ENCODE measurements at regions of chr7 and their contacts with region 1.

Region 1: GRCh38 chr7:1159891-1160668 is at the start of gene ZFAND2A:
- DNase-seq: peak; percentile 100
- ATAC-seq: peak; percentile 100
- H3K4me3 ChIP-seq: peak within 1 kb of the TSS; percentile 73 to 98
- H3K27ac ChIP-seq: peak within 1 kb of the TSS in 1 of 2 donors; percentile 83
- H3K4me1 ChIP-seq: no peaks in the 10 kb centered on the region
- H3K27me3 ChIP-seq: no peaks in the 10 kb centered on the region
- total RNA-seq, gene ZFAND2A: 18.8 to 24.8 TPM

Region 2: DNA sequence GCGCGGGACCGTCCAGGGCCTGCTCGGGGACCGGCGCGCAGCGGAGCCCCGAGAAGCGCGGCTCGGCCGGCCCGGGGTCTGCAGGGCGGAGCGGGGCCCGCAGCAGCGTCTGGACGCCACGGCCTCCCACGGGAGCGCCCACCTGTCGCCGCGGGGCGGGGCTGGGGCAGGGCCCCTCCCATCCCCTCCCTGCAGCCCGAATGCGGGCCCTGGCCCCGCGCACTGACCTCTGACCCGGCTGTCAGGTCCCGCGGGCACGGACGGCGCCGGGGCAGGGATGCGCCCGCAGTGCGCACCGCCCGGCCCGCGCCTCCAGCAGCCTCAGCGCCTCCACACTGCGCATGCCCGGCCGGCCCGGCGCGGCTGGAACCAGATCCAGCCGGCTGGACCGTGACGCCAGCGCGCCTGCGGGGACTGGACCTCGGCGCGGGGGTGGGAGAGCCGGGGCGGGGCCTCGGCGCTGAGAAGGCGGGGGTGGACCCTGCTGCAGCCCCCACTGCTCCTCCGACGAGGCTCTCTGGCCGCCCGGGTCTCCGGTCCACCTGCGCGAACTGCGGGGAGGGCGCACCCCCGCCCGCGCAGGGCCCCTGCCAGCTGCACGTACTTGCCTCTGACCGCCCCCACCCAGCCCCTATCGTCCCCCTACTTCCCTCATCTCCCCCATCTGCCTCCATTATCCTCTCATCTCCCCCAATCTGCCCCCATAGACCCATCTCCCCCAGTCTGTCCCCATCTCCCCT is 131.9 kb before region 1 on chr7:
- intact Hi-C with region 1: no loop called
- DNase-seq: peak; percentile 96 to 97
- ATAC-seq: peak; percentile 93
- H3K4me3 ChIP-seq: peak overlapping the region; percentile 69 to 84
- H3K27ac ChIP-seq: peak overlapping the region; percentile 15 to 77
- H3K4me1 ChIP-seq: no peaks in the 10 kb centered on the region
- H3K27me3 ChIP-seq: no peaks in the 10 kb centered on the region

Region 3: GRCh38 chr7:1137510-1138167 is 22.4 kb before region 1 on chr7:
- intact Hi-C with region 1: loop called in 1 of 2 experiments (anchors 1 kb)
- DNase-seq: no peak
- ATAC-seq: peak; percentile 90
- H3K4me3 ChIP-seq: peak overlapping the region; percentile 68 to 76
- H3K27ac ChIP-seq: no peak overlapping the region
- H3K4me1 ChIP-seq: no peaks in the 10 kb centered on the region
- H3K27me3 ChIP-seq: no peaks in the 10 kb centered on the region

Region 4: DNA sequence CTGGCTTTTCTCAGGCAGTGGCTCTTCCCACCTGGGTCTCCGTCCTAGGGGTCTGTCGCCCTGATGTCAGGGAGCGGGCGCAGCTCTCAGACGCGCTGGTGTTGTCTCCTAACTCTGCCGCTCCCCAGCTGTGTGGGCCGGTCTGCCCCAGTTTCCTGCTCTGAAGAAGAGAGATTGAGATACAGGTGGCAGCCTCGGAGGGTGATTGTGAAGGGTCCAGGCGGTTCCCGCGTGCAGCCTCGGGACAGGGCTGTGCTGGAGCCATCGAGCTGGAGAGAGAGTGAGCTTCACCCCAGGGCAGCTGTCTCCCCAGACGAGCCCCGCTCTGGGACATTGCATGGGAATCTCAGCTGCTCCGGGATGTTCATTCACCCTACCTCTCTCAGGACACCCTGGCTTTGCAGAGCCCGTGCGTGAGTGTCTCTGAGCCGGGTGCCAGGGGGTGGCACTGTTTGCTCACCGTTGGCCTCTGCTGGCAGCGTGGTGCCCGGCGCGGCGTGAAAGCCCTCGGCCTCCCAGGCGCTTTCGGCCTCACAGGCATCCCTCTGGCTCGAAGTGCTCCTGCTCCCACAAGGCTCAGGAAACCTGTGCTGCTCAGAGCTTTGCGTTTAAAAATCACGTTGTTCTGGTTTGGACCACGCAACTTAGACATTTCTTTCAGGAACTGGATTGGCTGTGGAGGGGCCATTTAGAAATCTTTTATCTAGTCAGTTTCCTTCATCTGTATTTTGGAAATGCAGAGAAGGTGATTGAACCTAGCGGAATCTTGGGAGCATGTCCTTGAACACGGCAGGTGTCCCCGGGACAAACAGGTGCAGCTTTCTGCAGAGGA is 33.7 kb after region 1 on chr7:
- intact Hi-C with region 1: no loop called
- DNase-seq: peak in 1 of 2 donors; percentile 54
- ATAC-seq: peak; percentile 74
- H3K4me3 ChIP-seq: no peak overlapping the region
- H3K27ac ChIP-seq: no peak overlapping the region
- H3K4me1 ChIP-seq: no peaks in the 10 kb centered on the region
- H3K27me3 ChIP-seq: no peaks in the 10 kb centered on the region

Measured in aorta (tissue), 5 donors.